Heart right ventricle (tissue), 16 donors: ENCODE measurements at regions of chr16 and their contacts with region 1.

Region 1: DNA sequence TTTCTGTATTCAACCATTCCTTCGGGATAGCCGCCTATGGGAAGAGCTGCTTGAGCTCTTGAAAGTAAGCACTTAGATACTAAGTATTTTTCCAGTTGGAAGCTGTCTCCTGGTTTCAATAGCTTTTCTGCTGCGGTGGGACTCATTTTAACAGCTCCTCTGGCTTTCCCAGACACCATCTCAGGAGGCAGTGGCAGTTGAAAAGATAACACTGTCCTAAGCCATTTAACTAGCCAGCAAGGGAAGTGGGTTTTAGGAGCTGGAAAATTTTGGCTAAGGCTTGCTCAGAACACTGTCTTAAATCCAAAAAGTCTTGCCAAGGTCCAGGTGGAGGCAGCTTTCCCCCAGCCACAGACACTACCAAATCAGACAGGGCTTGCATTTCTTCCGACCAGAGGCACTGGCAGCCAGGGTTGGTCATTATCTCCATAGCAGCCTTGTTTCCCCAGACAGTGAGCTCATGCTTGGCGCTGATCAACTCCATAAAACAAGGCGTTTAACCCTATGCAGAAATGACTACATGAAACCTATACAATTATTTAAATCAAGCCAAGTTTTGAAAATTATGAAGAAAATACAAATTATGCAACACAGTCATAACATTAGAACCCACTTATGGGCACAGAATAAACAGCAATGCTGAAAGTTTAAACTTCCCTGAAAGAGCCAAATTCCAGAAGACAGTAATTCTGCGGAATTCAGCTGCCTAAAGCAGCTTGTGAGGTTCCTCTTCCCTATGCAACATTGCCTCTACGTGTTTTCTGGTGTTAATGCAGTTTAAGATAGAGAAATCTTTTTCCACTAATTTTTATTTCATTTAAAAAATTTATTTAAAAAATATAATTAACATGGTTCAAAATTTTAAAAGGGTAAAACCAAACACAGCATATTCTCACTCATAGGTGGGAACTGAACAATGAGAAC is 25.0 kb downstream of the GABARAPL2 start:
- DNase-seq: peak; percentile 45 to 87
- ATAC-seq: peak; percentile 88 to 94 (median 91)
- H3K4me3 ChIP-seq: peak overlapping the region in 1 of 10 donors; percentile 8
- H3K27ac ChIP-seq: peak overlapping the region; percentile 51 to 94 (median 81)
- H3K4me1 ChIP-seq: peaks cover 10 to 70% (median 55%) of the 10 kb centered on the region in 9 donors
- H3K27me3 ChIP-seq: no peaks in the 10 kb centered on the region
- CTCF ChIP-seq: peak in 4 of 9 donors; percentile 29 to 51 (median 38)

Region 2: GRCh38 chr16:75420987-75421819 is 170.0 kb before region 1 on chr16:
- intact Hi-C with region 1: no loop called
- DNase-seq: peak; percentile 82 to 85
- ATAC-seq: peak; percentile 78 to 96 (median 93)
- H3K4me3 ChIP-seq: peak overlapping the region in 2 of 10 donors; percentile 2 to 14
- H3K27ac ChIP-seq: peak overlapping the region in 8 of 10 donors; percentile 14 to 71 (median 52)
- H3K4me1 ChIP-seq: peaks cover 2 to 43% (median 26%) of the 10 kb centered on the region in 9 donors
- H3K27me3 ChIP-seq: no peaks in the 10 kb centered on the region
- CTCF ChIP-seq: peak in 2 of 9 donors; percentile 7 to 11

Region 3: DNA sequence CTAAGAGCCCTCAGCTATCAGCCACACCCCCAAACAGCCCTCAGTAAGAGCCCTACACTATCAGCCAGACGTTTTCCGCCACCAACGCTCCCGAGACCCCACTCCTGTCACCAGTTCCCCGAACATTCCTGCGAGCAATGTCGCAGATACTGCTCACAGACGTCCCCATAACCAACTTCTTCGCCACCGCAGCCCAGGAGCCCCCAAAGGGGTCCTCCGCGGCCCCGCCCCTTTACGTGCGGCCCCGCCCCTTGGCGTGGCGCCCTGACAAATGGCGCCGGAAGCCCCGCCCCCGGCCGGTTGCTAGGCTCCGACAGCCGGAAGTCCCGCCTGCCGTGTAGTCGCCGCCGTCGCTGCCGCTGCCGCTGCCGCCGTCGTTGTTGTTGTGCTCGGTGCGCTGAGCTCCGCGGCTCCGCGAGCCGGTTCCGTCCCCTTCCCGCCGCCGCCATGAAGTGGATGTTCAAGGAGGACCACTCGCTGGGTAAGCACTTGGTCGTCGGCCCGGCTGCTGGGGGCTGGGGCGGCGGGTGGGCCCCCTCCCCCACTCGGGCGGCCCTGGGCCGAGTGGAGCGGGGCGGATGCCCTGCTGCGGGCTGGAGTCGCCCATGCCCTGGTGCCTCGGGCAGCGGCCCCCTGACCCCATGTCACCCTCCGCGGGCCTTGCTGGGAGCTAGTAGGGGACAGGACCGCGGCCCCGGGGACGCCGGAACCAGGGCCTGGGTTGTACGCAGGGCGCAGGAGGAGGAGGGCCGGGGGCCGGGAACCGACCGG is 25.0 kb before region 1 on chr16 and contains the start of gene GABARAPL2:
- intact Hi-C with region 1: loop called in 1 of 10 experiments (anchors 2 kb)
- DNase-seq: peak; percentile 77 to 89
- ATAC-seq: peak; percentile 93 to 97 (median 94)
- H3K4me3 ChIP-seq: peak within 1 kb of the TSS; percentile 88 to 100 (median 96)
- H3K27ac ChIP-seq: peak within 1 kb of the TSS; percentile 73 to 95 (median 90)
- H3K4me1 ChIP-seq: peaks cover 30 to 58% (median 55%) of the 10 kb centered on the region in 9 donors
- H3K27me3 ChIP-seq: no peaks in the 10 kb centered on the region
- CTCF ChIP-seq: no peak
- total RNA-seq, gene GABARAPL2: 177 to 262 (median 243) TPM

Region 4: GRCh38 chr16:75572864-75573542 is 18.2 kb before region 1 on chr16:
- intact Hi-C with region 1: loop called in 2 of 10 experiments (anchors 2 kb)
- DNase-seq: no peak
- ATAC-seq: no peak
- H3K4me3 ChIP-seq: no peak overlapping the region
- H3K27ac ChIP-seq: peak overlapping the region in 1 of 10 donors; percentile 11
- H3K4me1 ChIP-seq: peaks cover 33 to 88% (median 69%) of the 10 kb centered on the region in 9 donors
- H3K27me3 ChIP-seq: no peaks in the 10 kb centered on the region
- CTCF ChIP-seq: no peak